ENCODE measurements at regions of chr17 and their contacts with region 1.

Region 1: DNA sequence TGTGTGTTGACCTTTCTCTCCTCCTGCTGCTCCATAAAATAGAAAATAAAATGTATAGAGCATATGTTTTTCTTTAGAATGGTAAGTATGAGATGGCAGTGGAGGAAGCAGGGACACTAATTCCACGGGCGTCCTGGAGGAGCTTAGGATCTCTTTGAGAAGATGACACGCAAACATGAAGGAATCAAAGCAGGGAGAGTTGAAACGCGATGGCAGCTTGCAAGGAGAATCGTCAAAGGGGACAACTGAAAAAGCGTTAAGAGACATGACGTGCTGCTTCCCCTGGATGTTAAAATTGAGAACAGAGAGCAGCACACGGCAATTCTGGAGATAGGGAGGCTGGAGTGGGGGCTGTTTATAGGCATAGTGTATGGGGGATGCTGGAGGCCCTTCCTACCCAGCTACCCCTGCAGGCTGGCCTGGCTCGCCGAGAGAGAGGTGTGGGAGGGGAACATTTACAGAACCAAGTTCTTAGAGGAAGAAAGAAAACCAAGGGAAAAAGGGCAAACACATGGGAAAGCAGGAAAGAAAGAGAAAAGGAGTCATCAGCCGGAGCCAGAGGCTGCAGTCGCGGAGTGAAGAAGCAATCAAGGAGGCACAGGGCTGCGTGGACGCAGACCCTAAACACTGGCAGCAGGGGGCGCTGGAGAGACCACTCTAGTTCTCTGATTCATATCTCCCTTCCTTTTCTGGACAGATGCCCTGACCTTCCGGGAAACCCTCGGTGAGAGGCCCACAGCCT is 55.8 kb downstream of the MYH13 start:
- DNase-seq: peak; percentile 5 to 64
- H3K4me3 ChIP-seq: no peak overlapping the region
- H3K27ac ChIP-seq: no peak overlapping the region
- H3K4me1 ChIP-seq: peaks cover 0 to 4% of the 10 kb centered on the region in 2 donors
- H3K27me3 ChIP-seq: no peaks in the 10 kb centered on the region
- CTCF ChIP-seq: peak in 5 of 6 experiments; percentile 21 to 69 (median 24)
- POLR2A ChIP-seq: no peak

Region 2: GRCh38 chr17:9890124-9890523 is 426.8 kb before region 1 on chr17:
- intact Hi-C with region 1: no loop called
- DNase-seq: no peak
- H3K4me3 ChIP-seq: no peak overlapping the region
- H3K27ac ChIP-seq: no peak overlapping the region
- H3K4me1 ChIP-seq: no peaks in the 10 kb centered on the region
- H3K27me3 ChIP-seq: no peaks in the 10 kb centered on the region
- CTCF ChIP-seq: peak in 1 of 6 experiments; percentile 18
- POLR2A ChIP-seq: no peak

Region 3: GRCh38 chr17:10622617-10623485 is 305.9 kb after region 1 on chr17:
- intact Hi-C with region 1: loop called (anchors 5 kb)
- DNase-seq: no peak
- H3K4me3 ChIP-seq: no peak overlapping the region
- H3K27ac ChIP-seq: no peak overlapping the region
- H3K4me1 ChIP-seq: no peaks in the 10 kb centered on the region
- H3K27me3 ChIP-seq: no peaks in the 10 kb centered on the region
- CTCF ChIP-seq: no peak
- POLR2A ChIP-seq: no peak